ENCODE measurements at regions of chr2 and their contacts with region 1.

Region 1: DNA sequence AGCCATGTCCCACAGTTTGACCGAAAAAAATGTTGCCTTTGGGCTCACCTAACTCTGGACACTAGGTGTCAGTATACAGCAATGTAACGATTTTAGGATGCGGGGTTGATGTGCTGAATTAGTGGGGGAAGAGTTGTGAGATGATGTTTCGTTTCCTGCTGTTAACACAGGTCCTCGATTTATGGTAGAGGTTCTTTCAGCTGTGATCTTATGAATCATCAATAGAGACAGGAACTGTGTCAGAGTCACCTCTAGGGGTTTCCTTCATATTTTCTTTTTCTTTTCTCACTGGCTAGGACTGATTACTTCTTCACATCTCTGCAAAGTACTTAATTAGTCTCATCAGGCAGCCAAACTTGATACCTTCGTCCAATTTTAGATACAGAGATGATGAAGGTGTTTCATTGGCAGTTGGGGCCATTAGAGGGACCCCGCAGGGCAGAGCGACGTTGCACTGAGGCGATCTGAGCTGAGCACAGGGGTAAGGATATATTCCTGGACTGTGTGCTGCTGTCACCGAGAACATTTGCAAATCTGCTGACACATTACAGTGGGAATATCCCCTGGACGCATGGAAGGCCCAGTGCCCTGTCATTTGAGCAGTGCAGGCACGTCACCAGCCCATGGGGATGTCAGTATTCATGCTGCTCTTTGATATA is 10.2 kb upstream of the MMADHC start:
- DNase-seq: no peak

Region 2: DNA sequence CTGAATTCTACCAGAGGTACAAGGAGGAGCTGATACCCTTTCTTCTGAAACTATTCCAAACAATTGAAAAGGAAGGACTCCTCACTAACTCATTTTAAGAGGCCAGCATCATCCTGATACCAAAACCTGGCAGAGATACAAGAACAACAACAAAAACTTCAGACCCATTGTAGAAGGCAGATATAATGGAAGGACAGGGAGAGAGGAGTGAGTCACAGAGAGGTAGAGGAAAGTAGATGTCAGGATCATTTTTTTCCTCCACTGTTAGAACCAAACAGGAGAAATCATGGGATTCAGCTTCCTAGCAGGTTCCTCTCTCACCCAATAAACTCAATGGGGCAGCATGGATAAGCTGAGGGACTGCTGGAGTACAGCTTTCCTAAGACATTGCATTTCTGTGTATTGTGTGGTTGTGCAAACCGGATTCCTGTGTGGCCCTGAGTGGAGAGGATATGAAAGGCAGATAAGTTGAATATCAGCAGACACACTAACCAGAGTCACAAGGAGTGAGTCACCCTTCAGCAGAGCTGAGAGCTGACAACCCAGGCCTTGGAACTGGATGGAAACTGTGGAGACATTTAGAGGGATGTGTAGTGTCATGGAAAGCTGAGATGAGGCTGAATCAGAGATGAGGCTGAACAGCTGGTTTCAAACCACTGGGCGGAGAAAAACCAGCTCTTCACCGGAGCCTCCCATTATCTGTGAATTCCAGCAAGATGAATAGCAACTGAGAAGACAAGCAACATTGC is 50.7 kb after region 1 on chr2:
- intact Hi-C with region 1: no loop called
- DNase-seq: no peak

Region 3: GRCh38 chr2:150143087-150143536 is 545.3 kb after region 1 on chr2:
- intact Hi-C with region 1: no loop called
- DNase-seq: no peak

Region 4: GRCh38 chr2:150610671-150611279 is 1013.0 kb after region 1 on chr2:
- intact Hi-C with region 1: loop called (anchors 5 kb)
- DNase-seq: no peak

Region 5: GRCh38 chr2:151051574-151052220 is 1453.9 kb after region 1 on chr2:
- intact Hi-C with region 1: loop called (anchors 5 kb)
- DNase-seq: no peak

Region 6: DNA sequence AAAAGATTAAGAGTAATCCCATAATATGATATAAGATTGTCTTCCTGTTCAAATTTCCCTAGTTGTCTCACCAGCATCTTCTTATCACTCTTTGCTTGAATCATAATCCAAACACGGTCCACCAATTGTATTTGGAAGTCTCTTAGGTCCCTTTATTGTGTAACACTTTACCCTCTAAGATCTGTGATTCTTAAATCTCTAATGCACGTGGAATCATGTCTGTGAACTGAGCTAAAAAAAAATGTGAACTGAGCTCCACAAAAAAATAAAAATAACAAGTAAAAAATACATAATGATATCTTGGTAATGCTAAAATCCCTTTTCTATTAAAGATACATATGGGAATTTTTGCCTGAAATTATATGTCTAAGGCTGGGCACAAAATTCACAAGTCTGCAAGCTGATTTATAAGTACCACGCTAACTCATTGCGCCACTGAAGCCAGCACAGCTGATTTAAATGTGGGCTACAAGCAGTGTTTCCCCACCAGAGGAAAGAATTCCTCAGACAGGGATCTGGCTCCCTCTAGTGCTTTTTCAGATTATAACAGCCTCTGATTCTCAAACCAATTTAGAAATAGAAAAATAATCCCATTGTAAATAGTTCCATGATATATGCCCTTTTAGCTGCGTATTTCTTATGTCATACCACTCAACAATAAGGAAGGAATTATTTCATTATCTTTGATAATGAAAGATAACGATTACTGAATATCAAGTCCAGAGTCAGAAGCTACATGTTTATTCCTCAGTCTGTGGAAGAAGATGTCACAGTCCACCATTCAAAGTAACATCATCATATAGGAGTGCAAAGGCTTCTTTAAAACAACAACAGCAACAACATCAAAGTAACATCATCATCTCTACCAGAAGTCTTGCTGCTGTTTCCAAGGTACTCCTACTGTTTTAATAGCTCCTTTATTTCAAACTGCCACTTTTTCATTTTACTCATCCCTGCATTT is 1641.0 kb after region 1 on chr2:
- intact Hi-C with region 1: loop called (anchors 5 kb)
- DNase-seq: no peak

Region 7: DNA sequence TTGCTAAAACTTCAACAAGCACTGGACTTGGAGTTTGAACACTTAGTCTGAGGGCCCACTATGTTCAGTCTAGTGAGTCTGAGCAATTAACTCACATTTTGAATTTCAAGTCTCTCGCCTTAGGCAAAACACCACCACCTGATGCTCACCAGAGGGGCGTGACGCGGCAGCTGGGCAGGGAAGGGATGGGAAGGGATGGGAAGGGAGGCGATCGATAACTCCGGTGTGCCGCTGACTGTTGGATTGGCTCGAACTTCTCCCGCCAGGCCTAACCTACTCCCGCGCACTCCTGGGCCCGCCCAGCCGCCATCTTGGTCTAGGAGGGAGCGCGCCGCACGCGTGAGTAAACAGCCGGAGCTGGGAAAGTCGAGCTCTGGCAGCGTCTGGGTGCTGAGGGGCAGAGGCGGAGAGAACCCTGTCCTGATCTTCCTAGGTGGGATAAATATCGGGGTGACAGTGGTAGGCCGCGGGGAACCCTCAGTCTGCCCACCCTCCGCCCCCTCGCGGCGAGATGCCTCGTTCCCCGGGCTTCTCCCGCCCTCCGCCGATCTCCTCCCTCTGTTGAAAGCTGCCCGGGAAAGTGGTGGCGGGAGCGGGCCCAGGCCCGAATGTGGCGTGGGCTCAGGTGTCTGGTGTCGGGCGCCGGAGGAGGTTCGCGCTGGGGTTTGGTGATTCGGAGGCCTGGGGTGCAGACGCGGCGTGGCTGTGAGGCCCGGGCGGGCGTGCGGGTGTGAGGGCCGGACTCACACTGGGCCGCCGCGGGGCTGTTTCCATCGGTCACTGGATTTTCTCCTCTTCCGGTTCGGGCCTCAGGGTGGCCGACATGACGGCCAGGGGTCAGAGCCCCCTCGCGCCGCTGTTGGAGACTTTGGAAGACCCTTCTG is 1812.0 kb after region 1 on chr2 and contains the start of gene RIF1:
- intact Hi-C with region 1: loop called (anchors 10 kb)
- DNase-seq: peak; percentile 94
- total RNA-seq, gene RIF1: 16.1 TPM